Natural killer cell (primary cell): ENCODE measurements at regions of chr21 and their contacts with region 1.

Region 1: GRCh38 chr21:29298348-29299045 is at the start of gene BACH1:
- DNase-seq: peak; percentile 86 to 90
- ATAC-seq: peak; percentile 69 to 91 (median 84)
- H3K4me3 ChIP-seq: peak within 1 kb of the TSS; percentile 74
- H3K4me3 Mint-ChIP-seq: peak within 1 kb of the TSS; percentile 94
- H3K27ac ChIP-seq: peak within 1 kb of the TSS; percentile 84
- H3K27ac Mint-ChIP-seq: peak within 1 kb of the TSS; percentile 84 to 95
- H3K4me1 ChIP-seq: peaks cover 17% of the 10 kb centered on the region
- H3K4me1 Mint-ChIP-seq: peaks cover 35 to 51% of the 10 kb centered on the region in 2 donors
- H3K27me3 ChIP-seq: no peaks in the 10 kb centered on the region
- H3K27me3 Mint-ChIP-seq: no peaks in the 10 kb centered on the region
- CTCF ChIP-seq: no peak
- total RNA-seq, gene BACH1: 74.2 to 111 (median 86.3) TPM

Region 2: GRCh38 chr21:29195981-29196669 is 102.4 kb before region 1 on chr21:
- intact Hi-C with region 1: loop called (anchors 10 kb)
- DNase-seq: peak; percentile 19 to 82
- ATAC-seq: peak; percentile 87 to 97 (median 95)
- H3K4me3 ChIP-seq: peak overlapping the region; percentile 12
- H3K4me3 Mint-ChIP-seq: peak overlapping the region; percentile 73
- H3K27ac ChIP-seq: peak overlapping the region; percentile 78
- H3K27ac Mint-ChIP-seq: peak overlapping the region; percentile 69 to 85
- H3K4me1 ChIP-seq: peaks cover 8% of the 10 kb centered on the region
- H3K4me1 Mint-ChIP-seq: peaks cover 19% of the 10 kb centered on the region in 2 donors
- H3K27me3 ChIP-seq: no peaks in the 10 kb centered on the region
- H3K27me3 Mint-ChIP-seq: peaks cover 13 to 14% of the 10 kb centered on the region in 2 donors
- CTCF ChIP-seq: no peak

Region 3: GRCh38 chr21:29786496-29787360 is 488.2 kb after region 1 on chr21:
- intact Hi-C with region 1: no loop called
- DNase-seq: no peak
- ATAC-seq: no peak
- H3K4me3 ChIP-seq: no peak overlapping the region
- H3K4me3 Mint-ChIP-seq: no peak overlapping the region
- H3K27ac ChIP-seq: no peak overlapping the region
- H3K27ac Mint-ChIP-seq: no peak overlapping the region
- H3K4me1 ChIP-seq: no peaks in the 10 kb centered on the region
- H3K4me1 Mint-ChIP-seq: no peaks in the 10 kb centered on the region
- H3K27me3 ChIP-seq: no peaks in the 10 kb centered on the region
- H3K27me3 Mint-ChIP-seq: no peaks in the 10 kb centered on the region
- CTCF ChIP-seq: no peak